Cardiac septum (tissue), 1 donor: ENCODE measurements at regions of chr6 and their contacts with region 1.

Region 1: DNA sequence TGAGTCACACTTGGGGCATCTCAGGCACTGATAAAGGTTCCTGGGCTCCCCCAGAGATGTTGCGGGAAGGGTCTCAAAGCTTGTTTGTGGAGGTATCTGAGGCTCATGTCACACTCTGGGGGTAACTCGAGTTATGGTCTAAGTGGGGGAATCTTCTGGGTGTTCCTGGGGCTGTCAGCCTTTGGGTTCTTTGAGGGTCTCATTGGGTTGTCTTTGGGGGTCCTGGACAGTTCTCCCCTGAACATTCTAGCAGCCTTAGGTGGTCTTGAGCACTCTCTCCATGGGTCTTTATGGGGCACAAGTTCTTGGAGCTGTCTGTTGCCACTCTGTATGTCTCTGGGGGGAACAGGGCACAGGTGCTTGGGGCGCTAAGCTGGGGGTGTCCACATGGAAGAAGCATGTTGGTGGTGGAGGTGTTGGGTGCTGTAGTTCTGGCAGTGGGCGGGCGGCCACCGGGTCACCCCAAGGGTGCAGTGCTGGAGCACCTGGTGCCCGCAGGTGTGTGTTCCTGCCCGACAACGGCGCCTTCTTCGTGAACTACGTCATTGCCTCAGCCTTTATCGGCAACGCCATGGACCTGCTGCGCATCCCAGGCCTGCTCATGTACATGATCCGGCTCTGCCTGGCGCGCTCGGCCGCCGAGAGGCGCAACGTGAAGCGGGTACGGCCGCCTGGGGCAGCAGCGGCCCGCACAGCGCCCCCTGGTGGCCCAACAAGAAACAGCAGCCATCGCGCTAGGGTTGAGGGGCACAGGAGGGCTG is 7.1 kb upstream of the CAPN11 start:
- DNase-seq: peak; percentile 88

Region 2: GRCh38 chr6:43856005-43856765 is 295.3 kb before region 1 on chr6:
- intact Hi-C with region 1: no loop called
- DNase-seq: no peak

Region 3: DNA sequence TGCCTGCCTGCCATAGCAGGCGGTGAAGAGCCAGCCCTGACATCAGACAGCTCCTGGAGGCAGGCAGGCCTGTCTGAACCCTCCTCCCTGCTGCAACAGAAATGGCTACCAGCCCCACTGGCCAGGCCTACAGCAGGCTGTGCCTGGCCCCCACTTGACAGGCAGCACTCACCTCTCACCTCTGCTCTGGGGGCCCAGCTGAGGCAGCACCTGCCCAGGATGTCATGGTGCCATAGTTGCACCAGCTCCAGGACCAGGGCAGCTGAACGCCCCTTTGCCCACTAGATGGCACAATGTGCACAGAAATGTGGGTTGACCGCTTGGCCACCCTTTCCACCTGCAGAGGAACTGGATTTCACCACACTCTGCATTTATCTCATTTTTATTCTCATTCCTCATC is 54.9 kb before region 1 on chr6:
- intact Hi-C with region 1: loop called (anchors 1 kb)
- DNase-seq: no peak